MCF 10A (cell line): ENCODE measurements at regions of chr22 and their contacts with region 1.

Region 1: GRCh38 chr22:50190182-50190940 is 4.6 kb downstream of the TRABD start:
- DNase-seq: peak; percentile 83
- H3K4me3 Mint-ChIP-seq: peak overlapping the region; percentile 73
- H3K27ac Mint-ChIP-seq: peak overlapping the region; percentile 69
- H3K4me1 Mint-ChIP-seq: peaks cover 5% of the 10 kb centered on the region
- H3K27me3 Mint-ChIP-seq: no peaks in the 10 kb centered on the region
- CTCF ChIP-seq: peak; percentile 48

Region 2: DNA sequence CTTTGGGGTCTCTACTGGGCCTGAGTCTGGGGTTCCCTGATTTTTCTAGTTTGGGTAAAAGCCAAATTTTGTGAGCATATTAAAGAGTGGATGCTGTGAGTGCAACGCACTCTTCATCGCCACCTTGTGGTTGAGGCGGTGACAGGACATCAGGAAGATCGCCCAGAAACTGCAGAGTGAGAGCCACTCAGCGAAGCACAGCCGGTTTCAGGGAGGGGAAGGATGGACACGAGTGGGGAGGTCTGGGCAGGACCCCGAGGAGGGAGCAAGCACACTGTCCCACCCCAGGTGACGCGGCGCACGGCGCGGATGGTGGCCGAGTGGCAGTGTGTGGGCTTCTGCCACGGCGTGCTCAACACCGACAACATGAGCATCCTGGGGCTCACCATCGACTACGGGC is 19.5 kb after region 1 on chr22:
- CTCF ChIA-PET with region 1: interaction called, 12 read pairs
- POLR2A ChIA-PET with region 1: interaction called, 7 read pairs
- intact Hi-C with region 1: no loop called
- DNase-seq: peak; percentile 74
- H3K4me3 Mint-ChIP-seq: no peak overlapping the region
- H3K27ac Mint-ChIP-seq: no peak overlapping the region
- H3K4me1 Mint-ChIP-seq: peaks cover 6% of the 10 kb centered on the region
- H3K27me3 Mint-ChIP-seq: no peaks in the 10 kb centered on the region
- CTCF ChIP-seq: peak; percentile 77